ENCODE measurements at regions of chr15 and their contacts with region 1.

Region 1: DNA sequence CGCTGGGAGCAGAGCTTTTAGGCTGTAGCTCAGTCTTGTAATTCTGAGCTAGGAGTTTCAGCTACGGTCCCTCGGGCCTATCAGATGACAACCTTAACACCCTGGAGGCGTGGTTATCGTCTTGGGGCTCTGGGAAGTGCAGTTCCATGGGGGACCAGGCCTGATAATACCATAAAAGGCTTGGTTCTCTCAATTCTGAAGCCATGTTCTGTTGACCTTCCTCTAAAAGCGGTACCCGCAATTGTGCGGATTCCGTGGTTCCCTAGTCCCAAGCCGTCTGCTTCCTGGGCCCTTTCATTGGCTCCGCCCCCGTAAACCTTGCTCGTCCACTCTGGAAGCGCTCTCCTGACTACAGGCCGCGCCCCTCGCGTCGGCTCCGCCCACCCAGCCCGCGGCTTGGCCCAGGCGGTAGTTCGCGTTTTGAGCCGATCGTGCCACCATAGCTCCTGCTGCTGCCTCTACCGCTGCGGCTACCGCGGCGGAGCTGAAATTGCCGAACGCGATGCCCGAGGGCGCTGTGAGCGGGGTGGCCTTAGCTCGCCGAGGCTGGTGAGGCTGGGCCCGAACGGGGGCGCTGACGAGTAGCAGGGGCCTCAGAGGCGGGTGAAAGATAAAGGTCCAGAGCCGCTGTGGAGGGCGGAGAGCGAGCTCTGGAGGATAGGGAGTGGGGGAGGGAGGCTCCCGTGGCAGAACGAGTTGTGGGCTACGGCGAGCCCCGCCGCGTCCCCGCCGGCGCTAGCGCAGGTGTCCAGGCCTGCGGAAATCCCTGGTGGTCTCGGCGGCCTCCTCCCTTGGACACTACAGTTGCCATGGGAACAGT is at the start of gene MAPKBP1:
- DNase-seq: peak; percentile 97
- H3K4me3 ChIP-seq: peak within 1 kb of the TSS; percentile 58 to 73
- H3K27ac ChIP-seq: peak within 1 kb of the TSS; percentile 77
- H3K4me1 ChIP-seq: no peaks in the 10 kb centered on the region
- H3K27me3 ChIP-seq: no peaks in the 10 kb centered on the region
- CTCF ChIP-seq: peak; percentile 31 to 77 (median 62)
- POLR2A ChIP-seq: peak; percentile 77
- total RNA-seq, gene MAPKBP1: 17.4 to 62.8 TPM

Region 2: DNA sequence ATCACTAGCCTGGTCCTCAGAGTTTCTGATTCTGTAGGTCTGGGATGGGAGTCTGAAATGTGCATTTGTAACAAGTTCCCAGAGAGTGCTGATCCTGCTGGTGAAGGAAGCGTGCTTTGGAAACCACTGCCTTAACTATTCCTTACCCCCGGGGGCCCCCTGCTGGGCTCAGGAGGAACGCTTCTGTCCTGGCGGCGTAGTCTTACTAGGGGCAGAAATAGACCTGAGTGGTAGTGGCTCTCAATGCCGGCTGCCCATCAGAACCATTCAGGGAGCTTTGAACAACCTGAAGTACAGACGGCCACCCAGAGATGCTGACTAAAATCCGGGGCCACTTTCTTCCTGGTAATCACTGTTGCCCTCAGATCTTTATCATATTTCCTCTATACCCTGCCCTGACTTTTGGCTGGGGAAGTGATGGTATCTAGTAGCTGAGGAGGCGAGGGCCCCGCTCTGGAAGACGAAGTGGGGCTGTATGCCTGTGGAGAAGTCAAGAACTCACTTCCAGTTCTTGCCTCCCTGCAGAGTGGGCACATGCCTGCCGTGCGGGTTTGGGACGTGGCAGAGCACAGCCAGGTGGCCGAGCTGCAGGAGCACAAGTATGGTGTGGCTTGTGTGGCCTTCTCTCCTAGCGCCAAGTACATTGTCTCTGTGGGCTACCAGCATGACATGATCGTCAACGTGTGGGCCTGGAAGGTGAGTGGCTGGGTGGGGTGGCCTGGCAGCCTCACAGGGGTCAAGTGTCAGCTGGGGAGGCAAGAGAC is 37.3 kb after region 1 on chr15:
- intact Hi-C with region 1: loop called (anchors 1 kb)
- DNase-seq: peak; percentile 80
- H3K4me3 ChIP-seq: no peak overlapping the region
- H3K27ac ChIP-seq: no peak overlapping the region
- H3K4me1 ChIP-seq: no peaks in the 10 kb centered on the region
- H3K27me3 ChIP-seq: no peaks in the 10 kb centered on the region
- CTCF ChIP-seq: peak; percentile 70 to 93 (median 88)
- POLR2A ChIP-seq: no peak

Region 3: GRCh38 chr15:41827880-41828806 is 53.9 kb after region 1 on chr15 and contains the start of gene JMJD7:
- intact Hi-C with region 1: loop called (anchors 1 kb)
- DNase-seq: peak; percentile 95
- H3K4me3 ChIP-seq: peak within 1 kb of the TSS; percentile 48 to 64
- H3K27ac ChIP-seq: peak within 1 kb of the TSS; percentile 77 to 79
- H3K4me1 ChIP-seq: peaks cover 10% of the 10 kb centered on the region
- H3K27me3 ChIP-seq: no peaks in the 10 kb centered on the region
- CTCF ChIP-seq: peak in 1 of 4 experiments; percentile 18
- POLR2A ChIP-seq: peak; percentile 88
- total RNA-seq, gene JMJD7: 20.7 to 56.6 TPM

Region 4: DNA sequence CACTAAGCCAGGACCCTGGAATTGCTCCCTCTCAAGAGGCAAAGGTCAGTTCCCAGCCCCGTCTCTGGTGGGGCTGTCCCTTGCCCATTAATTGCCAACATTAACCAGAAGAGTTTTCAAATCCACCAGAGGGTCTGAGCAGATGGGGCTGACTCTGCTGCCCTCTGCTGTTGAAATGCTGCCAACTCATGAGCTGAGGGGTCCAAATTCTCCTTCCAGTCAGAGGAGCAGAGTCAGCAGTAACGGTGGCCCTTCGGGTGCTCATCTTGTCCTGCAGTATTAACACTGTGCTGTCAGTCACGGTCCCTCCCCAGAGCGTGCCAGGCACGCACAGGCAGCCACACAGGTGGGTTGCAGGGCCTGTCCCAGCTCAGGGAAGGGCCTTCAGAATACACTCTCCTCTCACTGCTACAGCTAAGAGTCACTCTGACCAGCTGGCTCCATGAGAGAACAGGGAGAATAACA is 130.3 kb after region 1 on chr15:
- intact Hi-C with region 1: loop called (anchors 10 kb)
- DNase-seq: peak; percentile 51
- H3K4me3 ChIP-seq: no peak overlapping the region
- H3K27ac ChIP-seq: no peak overlapping the region
- H3K4me1 ChIP-seq: no peaks in the 10 kb centered on the region
- H3K27me3 ChIP-seq: no peaks in the 10 kb centered on the region
- CTCF ChIP-seq: peak; percentile 27 to 84 (median 72)
- POLR2A ChIP-seq: no peak

Region 5: DNA sequence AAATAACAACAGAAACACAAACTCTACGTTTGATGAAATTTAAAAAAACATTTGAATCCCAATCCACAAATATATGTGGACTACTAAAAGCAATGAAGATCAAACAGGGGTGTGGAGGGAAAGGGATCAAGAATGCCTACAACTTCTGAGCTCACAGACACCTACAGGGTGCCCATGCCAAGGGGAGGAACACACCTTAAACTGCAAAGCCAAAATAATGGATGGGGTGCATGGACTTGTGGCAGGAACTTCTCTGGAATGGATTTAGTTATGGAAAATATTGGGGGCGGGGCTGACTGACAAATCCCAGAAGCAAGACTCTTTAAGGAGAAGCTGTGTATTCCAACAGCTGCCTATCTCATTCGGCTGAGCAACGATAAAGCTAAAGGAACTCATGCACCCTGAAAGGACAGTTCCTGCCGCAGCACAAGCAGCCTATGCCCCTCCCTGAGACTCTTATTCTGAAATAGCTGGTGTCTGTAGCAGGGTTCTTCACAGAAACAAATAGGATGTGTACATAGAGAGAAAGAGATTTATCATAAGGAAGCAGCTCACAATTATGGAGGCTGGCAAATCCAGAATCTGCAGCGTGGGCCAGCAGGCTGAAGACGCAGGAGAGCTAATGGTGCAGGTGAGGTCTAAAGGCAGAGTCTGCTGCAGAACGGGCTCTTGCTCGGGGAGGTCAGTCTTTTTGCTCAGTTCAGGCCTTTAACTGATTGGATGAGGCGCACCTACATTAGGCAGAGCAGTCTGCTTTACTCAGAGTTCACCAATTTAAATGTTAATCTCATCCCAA is 344.6 kb after region 1 on chr15:
- intact Hi-C with region 1: no loop called
- DNase-seq: no peak
- H3K4me3 ChIP-seq: peak overlapping the region; percentile 3 to 5
- H3K27ac ChIP-seq: peak overlapping the region in 1 of 2 donors; percentile 8
- H3K4me1 ChIP-seq: no peaks in the 10 kb centered on the region
- H3K27me3 ChIP-seq: no peaks in the 10 kb centered on the region
- CTCF ChIP-seq: peak in 1 of 4 experiments; percentile 2
- POLR2A ChIP-seq: no peak